Sigmoid colon (tissue), 7 donors: ENCODE measurements at regions of chr18 and their contacts with region 1.

Region 1: GRCh38 chr18:10560450-10561045 is 34.7 kb downstream of the NAPG start:
- DNase-seq: peak; percentile 86
- H3K4me3 ChIP-seq: peak overlapping the region in 3 of 4 donors; percentile 28 to 30 (median 30)
- H3K27ac ChIP-seq: no peak overlapping the region
- H3K4me1 ChIP-seq: peaks cover 0 to 13% (median 6%) of the 10 kb centered on the region in 4 donors
- H3K27me3 ChIP-seq: no peaks in the 10 kb centered on the region
- CTCF ChIP-seq: peak; percentile 43 to 84 (median 80)
- EP300 ChIP-seq: no peak
- POLR2A ChIP-seq: no peak

Region 2: GRCh38 chr18:11149441-11150270 is 589.1 kb after region 1 on chr18 and contains the start of gene PIEZO2:
- intact Hi-C with region 1: loop called (anchors 5 kb)
- DNase-seq: peak; percentile 84
- H3K4me3 ChIP-seq: peak within 1 kb of the TSS; percentile 27 to 53 (median 44)
- H3K27ac ChIP-seq: peak within 1 kb of the TSS in 3 of 4 donors; percentile 41 to 60 (median 56)
- H3K4me1 ChIP-seq: peaks cover 0 to 21% (median 15%) of the 10 kb centered on the region in 4 donors
- H3K27me3 ChIP-seq: peaks cover 8 to 41% (median 28%) of the 10 kb centered on the region in 3 donors
- CTCF ChIP-seq: no peak
- EP300 ChIP-seq: no peak
- POLR2A ChIP-seq: no peak
- total RNA-seq, gene PIEZO2: 24.3 to 35.2 (median 26.9) TPM

Region 3: GRCh38 chr18:11553098-11553940 is 992.8 kb after region 1 on chr18:
- intact Hi-C with region 1: loop called (anchors 5 kb)
- DNase-seq: no peak
- H3K4me3 ChIP-seq: no peak overlapping the region
- H3K27ac ChIP-seq: no peak overlapping the region
- H3K4me1 ChIP-seq: no peaks in the 10 kb centered on the region
- H3K27me3 ChIP-seq: no peaks in the 10 kb centered on the region
- CTCF ChIP-seq: peak; percentile 64 to 83 (median 74)
- EP300 ChIP-seq: no peak
- POLR2A ChIP-seq: no peak